ENCODE measurements at regions of chr10 and their contacts with region 1.

Region 1: DNA sequence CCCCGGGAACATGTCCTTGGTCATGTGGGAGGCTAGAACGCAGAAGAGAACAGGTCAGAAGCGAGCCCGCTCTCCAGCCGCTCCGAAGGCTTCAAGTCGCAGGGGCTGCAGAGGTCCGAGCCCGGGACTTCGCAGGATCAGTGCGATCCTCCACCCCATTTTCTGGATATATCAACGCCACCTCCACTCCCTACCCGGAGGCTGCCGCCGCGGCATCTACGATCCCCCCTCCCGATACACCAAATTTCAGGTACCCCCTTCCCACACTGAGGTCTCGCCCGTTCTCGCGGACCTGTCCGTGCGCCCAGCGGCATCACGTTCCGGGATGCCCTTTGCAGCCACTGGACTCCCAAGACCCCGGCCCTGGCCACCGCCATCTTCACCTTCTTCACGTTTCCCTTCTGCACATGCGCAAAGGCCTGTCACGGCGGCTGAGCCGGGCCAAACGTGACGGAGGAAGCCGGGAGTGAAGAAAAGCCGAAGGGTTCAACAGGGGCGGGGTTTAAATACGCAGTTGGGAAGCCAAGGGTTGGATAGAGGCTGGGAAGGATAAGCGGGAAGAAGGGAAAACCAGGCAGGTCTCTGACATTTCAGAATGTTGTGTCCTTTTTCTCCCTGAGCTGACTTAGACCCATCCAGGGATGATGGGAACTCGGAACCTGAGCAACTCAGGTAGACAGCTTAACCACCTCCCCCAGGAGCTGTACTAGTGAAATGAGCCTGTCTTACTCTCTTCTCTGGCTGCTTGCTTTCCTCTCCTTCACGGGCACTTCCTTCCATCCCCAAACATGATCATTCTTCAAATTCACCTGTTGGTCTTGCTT is at the start of gene NDUFB8:
- DNase-seq: peak; percentile 82 to 92 (median 84)
- ATAC-seq: peak; percentile 81
- H3K4me3 ChIP-seq: peak within 1 kb of the TSS; percentile 96
- H3K4me3 Mint-ChIP-seq: peak within 1 kb of the TSS; percentile 90
- H3K27ac ChIP-seq: peak within 1 kb of the TSS; percentile 71 to 80
- H3K27ac Mint-ChIP-seq: peak within 1 kb of the TSS; percentile 86
- H3K4me1 ChIP-seq: peaks cover 39% of the 10 kb centered on the region
- H3K4me1 Mint-ChIP-seq: peaks cover 38% of the 10 kb centered on the region
- H3K27me3 ChIP-seq: no peaks in the 10 kb centered on the region
- H3K27me3 Mint-ChIP-seq: no peaks in the 10 kb centered on the region
- CTCF ChIP-seq: no peak
- total RNA-seq, gene NDUFB8: 155 to 173 TPM

Region 2: GRCh38 chr10:99394761-99395386 is 1134.8 kb before region 1 on chr10:
- CTCF ChIA-PET with region 1: no interaction called
- POLR2A ChIA-PET with region 1: no interaction called
- intact Hi-C with region 1: no loop called
- DNase-seq: no peak
- ATAC-seq: no peak
- H3K4me3 ChIP-seq: no peak overlapping the region
- H3K4me3 Mint-ChIP-seq: no peak overlapping the region
- H3K27ac ChIP-seq: no peak overlapping the region
- H3K27ac Mint-ChIP-seq: no peak overlapping the region
- H3K4me1 ChIP-seq: peaks cover 4% of the 10 kb centered on the region
- H3K4me1 Mint-ChIP-seq: peaks cover 6% of the 10 kb centered on the region
- H3K27me3 ChIP-seq: no peaks in the 10 kb centered on the region
- H3K27me3 Mint-ChIP-seq: no peaks in the 10 kb centered on the region
- CTCF ChIP-seq: no peak

Region 3: DNA sequence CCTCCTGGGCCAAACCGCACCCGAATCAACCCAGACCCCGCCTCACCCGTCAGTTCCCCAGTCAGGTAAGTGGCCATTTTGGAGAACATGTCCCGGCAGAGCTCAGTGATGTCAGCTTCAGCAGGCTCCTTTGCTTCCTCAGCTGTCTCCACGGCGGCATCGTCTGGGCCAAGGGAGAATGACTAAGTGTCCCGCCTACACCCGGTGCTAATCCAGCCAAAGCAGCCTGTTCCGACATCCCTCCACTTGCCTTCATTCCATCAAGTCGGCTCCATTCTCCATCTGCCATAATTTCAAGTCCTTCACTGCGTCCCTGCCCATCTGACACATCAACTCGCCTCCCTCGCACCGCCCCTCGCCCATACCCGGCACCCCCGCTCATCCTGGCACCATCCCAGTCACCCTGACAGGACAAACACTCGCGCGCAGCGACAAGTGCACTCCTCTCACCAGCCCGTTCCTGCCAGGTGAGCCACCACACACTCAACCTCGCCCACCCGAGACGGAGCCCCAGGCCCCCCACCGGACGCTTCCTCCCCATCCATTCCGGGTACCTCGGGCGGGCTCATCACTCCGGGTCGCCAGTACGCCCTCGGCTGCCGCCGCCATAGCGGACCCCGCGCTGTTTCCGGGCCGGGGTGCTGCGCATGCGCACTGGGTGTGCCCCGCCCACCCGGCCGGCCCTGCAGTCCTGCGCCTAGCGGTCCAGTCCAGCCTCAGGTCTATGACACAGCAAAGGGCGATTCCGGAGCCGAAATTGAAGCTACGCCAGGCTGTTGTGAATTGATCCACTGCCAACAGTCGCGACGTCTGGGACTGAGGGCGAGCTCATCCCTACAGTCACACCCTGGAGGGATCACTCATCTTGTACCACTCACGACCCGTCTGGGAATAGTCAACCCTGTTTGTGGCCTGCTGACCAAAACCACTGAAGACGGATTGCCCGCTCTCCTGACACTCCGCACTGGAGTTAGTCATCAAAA is 243.3 kb before region 1 on chr10 and contains the start of gene BLOC1S2:
- CTCF ChIA-PET with region 1: no interaction called
- POLR2A ChIA-PET with region 1: no interaction called
- intact Hi-C with region 1: loop called in 1 of 2 experiments (anchors 2 kb)
- DNase-seq: peak; percentile 70 to 92 (median 82)
- ATAC-seq: peak; percentile 81
- H3K4me3 ChIP-seq: peak within 1 kb of the TSS; percentile 96
- H3K4me3 Mint-ChIP-seq: peak within 1 kb of the TSS; percentile 98
- H3K27ac ChIP-seq: peak within 1 kb of the TSS; percentile 85 to 92
- H3K27ac Mint-ChIP-seq: peak within 1 kb of the TSS; percentile 97
- H3K4me1 ChIP-seq: peaks cover 22% of the 10 kb centered on the region
- H3K4me1 Mint-ChIP-seq: peaks cover 30% of the 10 kb centered on the region
- H3K27me3 ChIP-seq: no peaks in the 10 kb centered on the region
- H3K27me3 Mint-ChIP-seq: no peaks in the 10 kb centered on the region
- CTCF ChIP-seq: no peak
- total RNA-seq, gene BLOC1S2: 49.4 to 55.9 TPM

Region 4: DNA sequence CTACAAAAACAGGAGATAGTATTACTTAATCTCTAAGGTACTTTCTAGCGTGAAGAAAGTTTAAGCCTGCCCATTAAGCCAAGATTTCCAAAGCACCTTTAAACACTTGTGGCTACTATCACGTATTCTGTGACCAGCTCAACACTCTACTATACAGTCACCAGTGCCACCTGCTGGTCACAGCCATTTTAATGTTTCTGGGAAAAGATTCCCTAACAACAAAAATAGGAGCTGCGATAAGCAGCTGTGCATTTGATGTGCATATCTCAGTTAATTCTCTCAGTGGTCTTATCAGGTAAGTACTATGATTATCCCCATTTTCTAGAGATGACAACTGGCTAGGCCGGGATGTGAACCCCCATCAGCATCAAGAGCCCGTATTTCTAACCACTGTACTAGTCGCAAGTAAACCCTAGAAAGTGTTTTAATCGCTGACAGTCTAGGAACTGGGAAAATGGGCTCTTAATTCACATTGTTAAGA is 10.9 kb before region 1 on chr10:
- CTCF ChIA-PET with region 1: interaction called, 21 read pairs
- POLR2A ChIA-PET with region 1: interaction called, 7 read pairs
- intact Hi-C with region 1: no loop called
- DNase-seq: peak; percentile 38 to 76 (median 52)
- ATAC-seq: peak; percentile 80
- H3K4me3 ChIP-seq: no peak overlapping the region
- H3K4me3 Mint-ChIP-seq: no peak overlapping the region
- H3K27ac ChIP-seq: no peak overlapping the region
- H3K27ac Mint-ChIP-seq: peak overlapping the region; percentile 29
- H3K4me1 ChIP-seq: peaks cover 12% of the 10 kb centered on the region
- H3K4me1 Mint-ChIP-seq: peaks cover 16% of the 10 kb centered on the region
- H3K27me3 ChIP-seq: no peaks in the 10 kb centered on the region
- H3K27me3 Mint-ChIP-seq: no peaks in the 10 kb centered on the region
- CTCF ChIP-seq: peak; percentile 88